Dendritic cell treated with granulocyte-macrophage colony-stimulating factor and Interleukin-4, amounts not matched to agents 40 ng/mL and 50 ng/mL, for 4 days (primary cell): ENCODE measurements at regions of chr20 and their contacts with region 1.

Region 1: DNA sequence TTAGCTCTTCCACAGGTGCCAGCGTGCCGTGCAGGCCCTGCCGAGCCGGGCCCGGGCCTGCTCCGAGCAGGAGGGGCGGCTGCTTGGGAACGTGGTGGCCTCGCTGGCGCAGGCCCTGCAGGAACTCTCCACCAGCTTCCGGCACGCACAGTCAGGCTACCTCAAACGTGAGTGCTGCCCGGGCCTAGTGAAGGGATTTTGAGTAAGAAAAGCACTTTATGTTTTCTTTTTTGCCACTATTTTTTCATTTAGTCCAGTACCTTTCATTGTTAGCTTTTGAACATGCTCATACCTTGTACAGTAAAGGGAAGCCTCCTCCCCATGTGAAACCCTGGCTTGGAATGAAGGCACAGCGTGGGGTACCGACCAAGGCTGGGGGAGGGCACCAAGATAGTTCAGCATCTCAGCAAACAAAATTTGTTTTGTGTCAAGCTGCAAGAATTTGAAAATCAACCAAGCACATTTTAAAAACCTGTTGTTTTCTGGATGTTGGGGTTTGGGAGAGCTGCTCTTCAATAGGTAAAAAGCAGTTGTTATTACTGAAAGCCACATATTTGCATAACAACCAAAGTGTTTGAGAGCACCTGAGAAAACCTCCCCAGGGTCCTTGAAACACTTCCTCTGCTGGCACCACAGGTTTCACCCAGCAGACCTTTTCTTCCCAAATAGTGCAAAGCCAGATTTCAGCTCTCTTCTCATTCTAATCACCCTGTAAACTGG is 18.4 kb downstream of the STX16 start:
- H3K4me3 Mint-ChIP-seq: no peak overlapping the region
- H3K27ac Mint-ChIP-seq: no peak overlapping the region
- H3K4me1 Mint-ChIP-seq: peaks cover 17% of the 10 kb centered on the region
- H3K27me3 Mint-ChIP-seq: no peaks in the 10 kb centered on the region

Region 2: DNA sequence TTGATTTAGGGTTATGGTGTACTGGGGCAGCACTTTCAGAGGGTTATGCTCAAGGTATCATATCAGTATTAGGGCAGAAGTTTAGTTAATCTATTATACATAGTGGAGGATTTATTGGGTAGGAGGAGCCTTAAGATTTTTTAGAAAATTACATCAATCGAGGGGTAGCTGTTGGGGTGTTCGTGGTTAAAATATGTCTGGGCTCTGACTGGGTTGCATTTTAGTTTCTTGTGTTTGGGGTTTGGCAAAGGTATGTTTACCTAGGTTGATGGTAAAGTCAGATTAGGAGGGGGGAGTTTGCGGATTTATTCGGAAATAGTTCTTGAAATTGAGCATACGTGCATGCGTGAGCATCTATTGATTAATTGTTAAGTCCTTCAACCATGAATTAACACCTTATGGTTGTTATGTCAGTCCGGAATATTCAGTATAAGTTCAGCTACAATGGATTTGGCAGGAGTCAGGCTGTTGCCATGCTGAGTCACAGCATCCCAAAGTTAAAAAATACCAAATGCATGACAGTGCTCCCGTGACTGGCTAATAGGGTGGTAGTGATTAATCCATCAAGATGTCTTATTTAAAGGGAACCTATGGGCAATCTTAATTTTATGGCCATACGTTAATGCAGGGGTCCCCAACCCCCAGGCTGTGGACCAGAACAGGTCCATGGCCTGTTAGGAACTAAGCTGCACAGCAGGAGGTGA is 1308.1 kb before region 1 on chr20:
- intact Hi-C with region 1: loop called (anchors 10 kb)
- H3K4me3 Mint-ChIP-seq: no peak overlapping the region
- H3K27ac Mint-ChIP-seq: no peak overlapping the region
- H3K4me1 Mint-ChIP-seq: no peaks in the 10 kb centered on the region
- H3K27me3 Mint-ChIP-seq: no peaks in the 10 kb centered on the region

Region 3: DNA sequence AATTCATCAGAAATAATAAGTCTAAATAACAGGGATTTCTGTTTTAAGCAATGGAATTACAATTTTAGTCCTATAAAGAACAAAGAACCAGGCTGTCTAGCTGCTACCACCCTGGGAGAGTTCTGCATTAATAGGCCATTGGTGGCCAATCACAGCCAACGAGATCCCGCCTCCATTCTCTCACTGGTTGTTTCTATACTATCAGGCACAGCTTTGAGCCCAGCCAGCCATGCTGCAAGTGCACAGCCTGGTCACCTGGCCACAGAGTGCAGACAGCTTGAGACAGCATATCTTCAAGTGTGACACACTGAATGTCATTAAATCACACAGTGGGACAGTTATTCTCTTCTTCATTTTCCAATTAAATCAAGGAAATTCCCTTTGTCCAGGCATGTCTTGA is 376.0 kb before region 1 on chr20:
- intact Hi-C with region 1: no loop called
- H3K4me3 Mint-ChIP-seq: no peak overlapping the region
- H3K27ac Mint-ChIP-seq: no peak overlapping the region
- H3K4me1 Mint-ChIP-seq: peaks cover 24% of the 10 kb centered on the region
- H3K27me3 Mint-ChIP-seq: no peaks in the 10 kb centered on the region

Region 4: DNA sequence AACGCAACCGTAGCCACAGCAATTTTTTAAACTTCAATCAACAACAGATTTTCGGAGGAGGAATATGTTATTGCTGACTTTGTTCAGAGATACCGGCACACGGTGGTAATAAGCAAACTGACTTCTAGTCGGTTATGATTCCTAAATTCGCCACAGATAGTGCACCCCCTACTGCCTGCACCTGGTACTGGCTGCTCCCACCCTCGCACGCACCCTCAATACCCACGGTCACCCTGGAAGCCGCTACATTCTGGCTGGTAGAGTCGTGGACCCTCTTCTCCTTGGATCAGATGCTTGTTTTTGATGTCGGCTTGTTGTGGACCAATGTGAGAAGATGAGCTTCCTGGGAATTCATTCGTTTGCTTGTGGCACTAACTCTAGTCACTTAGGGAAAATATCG is 33.8 kb after region 1 on chr20:
- intact Hi-C with region 1: no loop called
- H3K4me3 Mint-ChIP-seq: no peak overlapping the region
- H3K27ac Mint-ChIP-seq: no peak overlapping the region
- H3K4me1 Mint-ChIP-seq: no peaks in the 10 kb centered on the region
- H3K27me3 Mint-ChIP-seq: no peaks in the 10 kb centered on the region

Region 5: DNA sequence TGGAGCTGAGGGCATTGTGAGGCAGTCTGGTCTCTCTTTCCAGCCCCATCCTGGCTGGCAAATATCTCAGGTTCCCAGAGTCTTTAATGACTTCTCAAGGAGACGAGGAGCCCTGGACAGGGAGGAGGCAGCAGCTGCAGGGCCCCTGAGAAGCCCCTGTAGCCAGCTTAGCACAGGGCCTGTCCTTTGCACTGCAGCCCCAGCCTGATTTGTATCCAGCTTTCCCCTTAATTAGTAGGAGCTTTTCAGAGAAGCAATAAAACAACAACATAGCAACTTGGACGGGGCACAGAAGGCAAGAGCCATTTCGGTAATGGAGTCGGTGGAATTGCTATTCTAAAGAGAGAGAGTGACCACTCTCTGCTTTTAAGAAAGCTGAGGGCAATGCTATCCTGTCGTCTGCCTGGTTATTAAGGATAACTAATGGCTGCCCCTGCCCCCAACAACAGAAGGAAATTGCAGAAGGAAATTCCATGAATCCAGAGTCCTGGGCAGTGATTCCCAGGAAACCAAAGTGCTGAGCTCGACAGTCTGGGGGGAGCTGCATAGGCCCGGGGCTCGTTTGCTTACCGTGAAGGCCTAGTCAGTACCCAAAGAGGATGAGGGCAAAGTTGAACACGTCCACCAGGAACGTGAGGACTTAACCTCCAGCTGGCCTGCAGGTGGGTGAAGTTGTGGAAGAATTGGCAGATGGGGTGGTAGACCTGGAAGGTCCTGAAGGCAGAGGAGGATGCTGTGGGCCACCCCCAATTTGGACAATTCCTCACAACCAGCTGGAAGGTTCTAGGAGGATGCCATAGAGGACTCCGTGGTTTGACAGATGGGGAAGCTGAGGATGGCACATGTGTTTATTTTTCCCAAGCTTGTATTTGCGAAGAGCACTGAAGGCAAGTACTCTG is 73.5 kb after region 1 on chr20:
- intact Hi-C with region 1: no loop called
- H3K4me3 Mint-ChIP-seq: no peak overlapping the region
- H3K27ac Mint-ChIP-seq: no peak overlapping the region
- H3K4me1 Mint-ChIP-seq: no peaks in the 10 kb centered on the region
- H3K27me3 Mint-ChIP-seq: peaks cover 26% of the 10 kb centered on the region